CD4-positive, alpha-beta T cell (primary cell): ENCODE measurements at regions of chr17 and their contacts with region 1.

Region 1: DNA sequence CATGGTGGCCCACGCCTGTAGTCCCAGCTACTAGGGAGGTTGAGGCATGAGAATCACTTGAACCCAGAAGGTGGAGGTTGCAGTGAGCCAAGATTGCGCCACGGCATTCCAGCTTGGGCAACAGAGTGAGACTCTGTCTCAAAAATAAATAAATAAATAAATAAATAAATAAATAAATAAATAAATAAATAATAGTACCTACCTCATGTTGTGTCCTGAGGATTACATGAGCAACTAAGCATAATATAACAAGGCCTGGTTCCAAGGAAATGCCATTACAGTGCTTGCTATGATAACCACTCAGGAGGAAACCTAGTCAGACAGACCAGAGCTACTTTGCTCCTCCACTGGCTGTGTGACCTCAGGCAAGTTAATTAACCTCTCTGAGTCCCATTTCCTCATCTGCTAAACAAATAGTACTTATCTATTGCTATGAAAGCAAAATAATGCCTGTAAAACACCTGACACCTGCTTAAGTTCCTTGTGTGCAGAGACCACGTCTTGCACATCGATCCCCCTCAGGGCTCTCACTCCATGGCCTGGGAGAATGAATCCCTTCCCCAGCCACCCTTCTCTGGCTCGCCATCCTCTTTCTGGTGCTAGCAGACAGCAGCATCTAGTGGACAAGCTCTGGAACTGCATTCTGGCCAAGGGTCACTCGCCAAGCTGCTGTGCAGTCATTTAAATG is 7.5 kb downstream of the EPOP start:
- DNase-seq: peak; percentile 18 to 74 (median 33)
- ATAC-seq: peak; percentile 60
- H3K4me3 ChIP-seq: no peak overlapping the region
- H3K4me3 Mint-ChIP-seq: no peak overlapping the region
- H3K27ac ChIP-seq: no peak overlapping the region
- H3K27ac Mint-ChIP-seq: no peak overlapping the region
- H3K4me1 ChIP-seq: no peaks in the 10 kb centered on the region
- H3K4me1 Mint-ChIP-seq: peaks cover 5% of the 10 kb centered on the region
- H3K27me3 ChIP-seq: peaks cover 36 to 42% of the 10 kb centered on the region in 2 experiments
- H3K27me3 Mint-ChIP-seq: peaks cover 73% of the 10 kb centered on the region
- CTCF ChIP-seq: peak; percentile 98

Region 2: GRCh38 chr17:38444151-38444550 is 223.1 kb before region 1 on chr17:
- CTCF ChIA-PET with region 1: interaction called, 5 read pairs
- POLR2A ChIA-PET with region 1: no interaction called
- intact Hi-C with region 1: loop called in 1 of 2 experiments (anchors 5 kb)
- DNase-seq: peak; percentile 30 to 74 (median 43)
- ATAC-seq: peak; percentile 94
- H3K4me3 ChIP-seq: no peak overlapping the region
- H3K4me3 Mint-ChIP-seq: peak overlapping the region; percentile 7
- H3K27ac ChIP-seq: no peak overlapping the region
- H3K27ac Mint-ChIP-seq: no peak overlapping the region
- H3K4me1 ChIP-seq: peaks cover 8% of the 10 kb centered on the region
- H3K4me1 Mint-ChIP-seq: peaks cover 5% of the 10 kb centered on the region
- H3K27me3 ChIP-seq: no peaks in the 10 kb centered on the region
- H3K27me3 Mint-ChIP-seq: peaks cover 5% of the 10 kb centered on the region
- CTCF ChIP-seq: peak; percentile 66

Region 3: GRCh38 chr17:38591759-38592241 is 75.4 kb before region 1 on chr17:
- CTCF ChIA-PET with region 1: no interaction called
- POLR2A ChIA-PET with region 1: no interaction called
- intact Hi-C with region 1: no loop called
- DNase-seq: peak in 3 of 14 experiments; percentile 50 to 64 (median 55)
- ATAC-seq: peak; percentile 55
- H3K4me3 ChIP-seq: no peak overlapping the region
- H3K4me3 Mint-ChIP-seq: no peak overlapping the region
- H3K27ac ChIP-seq: no peak overlapping the region
- H3K27ac Mint-ChIP-seq: no peak overlapping the region
- H3K4me1 ChIP-seq: peaks cover 35% of the 10 kb centered on the region
- H3K4me1 Mint-ChIP-seq: peaks cover 26% of the 10 kb centered on the region
- H3K27me3 ChIP-seq: peaks cover 79 to 86% of the 10 kb centered on the region in 2 experiments
- H3K27me3 Mint-ChIP-seq: peaks cover 96% of the 10 kb centered on the region
- CTCF ChIP-seq: no peak